ENCODE measurements at regions of chr5 and their contacts with region 1.

Region 1: DNA sequence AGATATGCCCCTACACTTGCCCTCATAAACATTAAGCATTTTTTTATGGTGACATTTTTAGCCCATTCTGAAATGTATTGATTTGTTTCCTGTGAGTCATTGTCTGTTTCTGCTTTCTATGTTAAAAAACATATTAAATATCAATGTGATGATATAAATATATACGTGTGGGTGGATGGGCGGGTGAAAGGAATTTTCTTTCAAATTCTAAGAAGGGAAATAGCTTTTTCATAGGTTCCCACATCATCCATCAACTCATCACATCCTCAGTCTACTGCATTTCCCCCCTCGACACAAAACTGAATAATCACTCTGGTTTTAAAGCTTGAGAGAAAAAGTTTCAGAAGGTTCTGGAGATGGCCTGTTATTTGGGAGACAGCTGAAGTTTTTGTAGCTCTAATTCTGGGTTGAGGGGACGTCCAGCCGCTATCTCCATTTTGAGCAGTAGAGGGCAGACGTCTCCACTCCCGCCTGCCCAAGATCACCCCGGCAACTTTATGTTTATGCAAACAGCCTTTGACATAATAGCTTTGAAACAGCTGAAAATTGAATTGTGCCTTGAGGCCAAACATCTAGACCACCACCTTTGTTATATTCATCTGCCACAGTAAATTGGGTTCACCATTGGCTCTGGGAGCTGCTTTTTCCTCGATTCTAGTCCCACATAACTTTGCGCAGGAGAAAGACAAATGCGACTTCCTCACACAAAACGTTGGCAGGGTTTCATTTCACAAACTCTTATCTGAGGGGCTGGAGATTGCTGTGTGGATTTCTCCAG is 216.2 kb upstream of the CLINT1 start:
- H3K4me3 ChIP-seq: no peak overlapping the region
- H3K27ac ChIP-seq: no peak overlapping the region
- H3K4me1 ChIP-seq: no peaks in the 10 kb centered on the region
- CTCF ChIP-seq: peak; percentile 57

Region 2: DNA sequence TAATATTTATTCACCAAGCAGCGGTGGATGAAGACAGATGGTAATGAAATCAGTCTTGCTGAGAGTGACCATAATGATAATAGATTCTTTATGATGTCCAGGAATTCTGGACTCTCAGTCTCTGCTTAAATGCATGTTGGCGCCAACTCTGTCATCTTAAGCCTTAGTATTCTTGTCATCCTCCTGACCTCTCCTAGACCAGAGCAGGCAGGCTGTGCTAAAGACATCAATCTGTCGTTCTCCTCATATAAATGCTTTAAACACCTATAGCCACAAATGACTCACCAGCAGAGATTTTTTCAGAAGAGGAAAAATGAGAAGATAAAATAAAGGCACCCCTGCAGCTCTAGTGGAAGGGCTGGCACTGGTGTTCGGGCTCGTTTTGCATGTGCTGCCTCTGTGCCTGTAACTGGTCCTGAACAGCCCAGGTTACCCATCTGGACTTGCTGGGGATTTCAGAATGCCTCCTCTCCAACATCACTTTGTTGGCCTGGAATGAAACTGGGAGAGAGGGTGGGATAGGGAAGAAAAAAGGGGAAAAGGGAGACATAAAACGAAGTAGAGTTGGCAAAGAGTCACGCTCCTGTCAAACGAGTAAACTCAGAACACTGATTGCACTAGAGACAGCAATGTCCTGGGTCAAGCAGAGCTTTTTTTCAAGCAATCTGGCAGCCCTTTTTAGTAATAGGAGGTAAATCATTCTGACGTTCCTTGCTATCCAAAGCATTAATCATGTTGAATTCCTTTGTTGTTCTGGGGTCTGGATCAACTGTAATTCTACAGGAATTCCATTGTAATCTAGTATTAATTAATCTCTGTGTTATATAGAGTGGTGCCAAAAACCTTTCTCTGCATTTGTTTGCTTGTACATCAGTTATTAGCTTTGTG is 20.7 kb before region 1 on chr5:
- CTCF ChIA-PET with region 1: interaction called, 92 read pairs
- POLR2A ChIA-PET with region 1: no interaction called
- H3K4me3 ChIP-seq: no peak overlapping the region
- H3K27ac ChIP-seq: no peak overlapping the region
- H3K4me1 ChIP-seq: peaks cover 14% of the 10 kb centered on the region
- CTCF ChIP-seq: no peak

Region 3: GRCh38 chr5:158096835-158097234 is 21.7 kb after region 1 on chr5:
- CTCF ChIA-PET with region 1: interaction called, 12 read pairs
- POLR2A ChIA-PET with region 1: no interaction called
- H3K4me3 ChIP-seq: no peak overlapping the region
- H3K27ac ChIP-seq: no peak overlapping the region
- H3K4me1 ChIP-seq: no peaks in the 10 kb centered on the region
- CTCF ChIP-seq: no peak

Measured in HEK293 (cell line).